A673 (cell line): ENCODE measurements at regions of chr10 and their contacts with region 1.

Region 1: DNA sequence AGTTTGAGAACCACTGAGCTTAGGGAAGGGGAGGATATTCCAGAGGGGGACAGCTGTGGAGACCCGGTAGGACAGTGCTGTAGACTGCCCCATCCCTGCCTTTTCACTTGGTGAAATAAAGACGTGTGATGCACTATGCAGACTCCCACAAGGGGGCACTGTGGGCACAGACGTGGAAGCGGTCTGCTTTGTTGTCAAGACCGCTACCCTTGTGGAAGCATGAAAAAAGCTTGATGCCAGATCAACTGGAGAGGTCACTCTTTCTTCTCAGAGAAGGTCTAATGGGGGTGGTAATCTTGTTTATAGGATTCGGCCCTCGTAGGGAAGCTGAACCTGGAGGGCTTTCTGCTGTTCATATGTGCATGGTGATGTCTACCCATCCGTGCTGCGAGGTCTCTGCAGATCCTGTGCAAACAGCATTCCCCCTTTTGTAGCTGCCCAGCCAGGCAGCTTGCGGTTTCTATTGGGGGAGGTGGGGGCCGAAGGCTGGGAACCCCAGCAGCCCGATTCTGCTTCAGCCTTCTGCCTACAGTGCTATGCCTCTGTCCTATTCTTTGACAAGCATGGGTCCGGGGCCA is 13.7 kb downstream of the RPS24 start:
- DNase-seq: peak; percentile 90
- H3K4me3 ChIP-seq: no peak overlapping the region
- H3K27ac ChIP-seq: peak overlapping the region; percentile 16
- H3K4me1 ChIP-seq: peaks cover 18% of the 10 kb centered on the region
- H3K27me3 ChIP-seq: no peaks in the 10 kb centered on the region
- CTCF ChIP-seq: peak; percentile 93

Region 2: DNA sequence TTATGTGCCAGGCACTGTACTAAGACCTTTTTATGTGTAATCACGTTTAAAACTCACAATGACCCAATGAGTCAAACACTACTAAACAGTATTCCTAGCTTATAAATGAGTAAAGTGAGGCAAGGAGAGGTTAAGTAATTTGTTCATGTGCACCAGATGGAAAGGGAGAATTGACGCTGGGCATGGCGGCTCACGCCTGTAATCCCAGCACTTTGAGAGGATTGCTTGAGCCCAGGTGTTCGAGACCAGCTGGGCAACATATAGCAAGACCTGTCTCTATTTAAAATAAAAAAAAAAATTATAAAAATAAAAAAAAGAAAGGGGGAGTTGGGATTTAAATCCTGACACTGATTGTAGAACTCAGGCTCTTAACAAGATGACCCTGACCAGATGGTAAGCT is 74.1 kb before region 1 on chr10:
- CTCF ChIA-PET with region 1: no interaction called
- POLR2A ChIA-PET with region 1: no interaction called
- intact Hi-C with region 1: no loop called
- DNase-seq: no peak
- H3K4me3 ChIP-seq: no peak overlapping the region
- H3K27ac ChIP-seq: no peak overlapping the region
- H3K4me1 ChIP-seq: peaks cover 5% of the 10 kb centered on the region
- H3K27me3 ChIP-seq: no peaks in the 10 kb centered on the region
- CTCF ChIP-seq: no peak

Region 3: DNA sequence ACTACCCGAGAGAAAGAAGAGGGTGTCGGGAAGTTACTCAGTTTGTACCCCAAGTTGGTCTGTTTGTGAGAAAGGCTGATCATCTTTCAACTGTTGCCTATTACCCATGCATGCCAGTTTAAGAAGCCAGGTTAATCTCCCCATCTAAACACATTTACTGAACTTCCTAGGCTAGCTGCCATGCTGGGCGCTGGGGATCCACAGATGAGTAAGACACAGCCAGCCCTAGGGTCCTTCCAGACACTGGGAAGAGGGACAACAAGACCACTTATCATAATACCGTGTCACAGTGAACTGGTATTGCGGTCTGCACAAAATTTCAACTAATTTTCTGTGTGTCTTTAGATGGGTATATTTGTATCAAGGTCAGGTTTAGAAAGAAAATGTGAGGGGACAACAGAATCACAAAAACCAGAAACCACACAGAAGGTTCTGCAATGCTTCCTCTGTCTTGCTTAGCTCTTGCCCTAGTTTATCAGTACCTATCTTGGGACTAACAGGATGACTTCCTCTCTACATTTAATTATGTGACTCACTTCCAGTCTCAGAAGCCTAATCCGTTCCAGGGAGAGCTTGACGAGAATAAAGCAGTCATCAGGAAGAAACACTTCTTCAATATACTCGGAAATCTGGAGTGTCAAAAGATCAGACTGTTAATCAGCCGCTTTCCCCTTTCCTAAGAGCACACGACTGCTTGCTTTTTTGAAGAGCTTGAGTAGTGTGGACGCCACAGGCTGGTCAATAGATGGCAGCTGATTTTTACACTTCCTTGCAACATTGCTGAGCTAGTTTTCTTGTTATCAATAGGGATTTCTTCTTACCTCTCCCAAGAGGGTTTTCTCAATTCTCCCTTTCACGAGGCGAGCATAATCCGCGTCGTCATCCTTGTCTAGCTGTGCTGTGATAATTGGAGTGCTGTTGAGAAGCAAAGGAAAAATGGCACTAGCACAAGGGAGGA is 63.7 kb before region 1 on chr10:
- CTCF ChIA-PET with region 1: no interaction called
- POLR2A ChIA-PET with region 1: interaction called, 10 read pairs
- intact Hi-C with region 1: no loop called
- DNase-seq: peak; percentile 91
- H3K4me3 ChIP-seq: no peak overlapping the region
- H3K27ac ChIP-seq: peak overlapping the region; percentile 62
- H3K4me1 ChIP-seq: peaks cover 29% of the 10 kb centered on the region
- H3K27me3 ChIP-seq: no peaks in the 10 kb centered on the region
- CTCF ChIP-seq: no peak

Region 4: DNA sequence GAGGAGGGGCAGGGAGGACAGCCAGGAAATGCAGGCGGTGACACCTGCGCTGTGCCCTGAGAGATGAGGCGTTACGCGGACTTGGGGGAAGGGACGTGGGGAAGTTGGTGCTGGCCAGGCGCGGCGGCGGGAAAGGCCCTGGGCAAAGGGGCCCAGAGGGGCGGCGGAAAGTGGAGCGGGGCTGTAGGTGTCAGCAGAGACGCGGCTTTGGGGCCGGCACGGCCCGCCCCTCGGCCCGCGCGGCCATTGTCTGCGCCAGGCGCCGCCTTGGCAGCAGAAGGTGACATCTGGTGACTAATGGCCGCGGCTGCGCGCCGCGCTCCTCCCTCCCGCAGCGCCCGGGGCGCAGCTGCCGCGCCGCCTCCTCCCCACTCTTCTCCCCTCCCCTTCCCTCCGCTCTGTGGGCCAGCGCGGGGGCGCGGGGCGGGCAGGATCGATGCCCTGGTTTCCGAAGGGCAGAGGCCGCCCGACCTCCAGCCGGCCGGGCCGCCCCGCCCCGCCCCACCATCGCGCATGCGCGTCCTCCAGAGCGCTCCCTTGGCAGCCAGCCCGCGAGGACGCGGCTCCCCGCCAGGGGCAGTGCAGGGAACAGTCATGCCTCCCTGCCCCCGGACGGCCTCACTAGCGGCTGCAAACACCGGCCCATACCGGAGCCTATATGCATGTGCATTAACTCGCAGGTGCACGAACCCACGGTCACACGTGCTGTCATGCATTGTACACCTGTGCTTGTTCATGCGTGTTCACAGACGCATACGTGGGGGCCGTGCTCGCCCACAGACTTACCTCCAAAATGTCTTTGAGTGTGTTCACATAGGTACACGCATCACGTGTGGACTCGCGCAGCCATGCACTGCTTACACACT is 255.8 kb after region 1 on chr10:
- CTCF ChIA-PET with region 1: no interaction called
- POLR2A ChIA-PET with region 1: no interaction called
- intact Hi-C with region 1: loop called (anchors 5 kb)
- DNase-seq: peak; percentile 87
- H3K4me3 ChIP-seq: peak overlapping the region; percentile 55
- H3K27ac ChIP-seq: peak overlapping the region; percentile 54
- H3K4me1 ChIP-seq: peaks cover 7% of the 10 kb centered on the region
- H3K27me3 ChIP-seq: peaks cover 10% of the 10 kb centered on the region
- CTCF ChIP-seq: peak; percentile 57

Region 5: GRCh38 chr10:78972947-78973900 is 925.8 kb after region 1 on chr10:
- CTCF ChIA-PET with region 1: no interaction called
- POLR2A ChIA-PET with region 1: no interaction called
- intact Hi-C with region 1: loop called (anchors 1 kb)
- DNase-seq: peak; percentile 95
- H3K4me3 ChIP-seq: peak overlapping the region; percentile 51
- H3K27ac ChIP-seq: peak overlapping the region; percentile 80
- H3K4me1 ChIP-seq: peaks cover 20% of the 10 kb centered on the region
- H3K27me3 ChIP-seq: no peaks in the 10 kb centered on the region
- CTCF ChIP-seq: no peak

Region 6: DNA sequence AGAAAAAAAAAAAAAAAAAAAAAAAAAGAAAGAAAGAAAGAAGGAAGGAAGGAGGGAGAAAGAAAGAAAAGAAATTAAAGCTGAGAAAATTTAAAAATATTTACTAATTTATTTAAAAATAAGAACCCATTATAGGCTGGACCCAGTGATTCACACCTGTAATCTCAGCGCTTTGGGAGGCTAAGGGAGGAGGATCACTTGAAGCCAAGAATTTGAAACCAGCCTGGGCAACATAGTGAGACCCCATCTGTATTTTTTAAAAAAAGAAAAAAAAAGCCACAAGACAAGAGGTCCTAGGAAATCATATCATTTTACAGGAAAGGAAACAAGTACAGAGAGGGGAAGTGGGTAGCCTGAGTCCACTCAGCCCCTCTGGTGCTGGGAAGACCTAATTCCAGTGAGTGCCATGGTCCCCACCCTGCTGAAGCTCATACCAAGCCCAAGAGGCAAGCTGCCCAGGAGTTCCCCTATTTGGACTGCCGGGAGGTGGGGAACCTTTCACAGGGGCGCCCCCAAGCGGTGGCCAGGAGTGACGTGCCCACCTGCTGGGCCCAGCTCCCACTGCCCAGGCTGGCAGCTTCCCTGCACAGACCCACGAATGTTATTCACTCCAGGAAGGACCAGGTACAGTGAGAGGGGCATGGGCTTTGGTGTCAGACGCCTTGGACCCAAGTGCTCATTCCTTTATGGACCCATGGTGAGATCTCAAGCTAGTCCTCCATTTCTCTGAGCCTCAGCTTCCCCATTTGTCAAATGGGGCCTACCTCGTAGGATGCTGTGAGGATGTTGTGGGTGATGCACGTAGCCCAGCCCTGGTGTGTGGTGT is 1155.0 kb after region 1 on chr10:
- CTCF ChIA-PET with region 1: interaction called, 7 read pairs
- POLR2A ChIA-PET with region 1: no interaction called
- intact Hi-C with region 1: loop called (anchors 2 kb)
- DNase-seq: peak; percentile 66
- H3K4me3 ChIP-seq: no peak overlapping the region
- H3K27ac ChIP-seq: no peak overlapping the region
- H3K4me1 ChIP-seq: peaks cover 6% of the 10 kb centered on the region
- H3K27me3 ChIP-seq: no peaks in the 10 kb centered on the region
- CTCF ChIP-seq: peak; percentile 72